ENCODE measurements at regions of chr7 and their contacts with region 1.

Region 1: GRCh38 chr7:5557920-5558401 is 134.3 kb upstream of the TNRC18 start:
- DNase-seq: peak; percentile 83 to 88
- ATAC-seq: peak; percentile 48
- H3K4me3 ChIP-seq: no peak overlapping the region
- H3K27ac ChIP-seq: peak overlapping the region; percentile 6 to 57
- H3K4me1 ChIP-seq: no peaks in the 10 kb centered on the region
- H3K27me3 ChIP-seq: no peaks in the 10 kb centered on the region

Region 2: GRCh38 chr7:5514440-5515035 is 43.4 kb before region 1 on chr7:
- intact Hi-C with region 1: no loop called
- DNase-seq: no peak
- ATAC-seq: no peak
- H3K4me3 ChIP-seq: peak overlapping the region in 1 of 2 donors; percentile 87
- H3K27ac ChIP-seq: no peak overlapping the region
- H3K4me1 ChIP-seq: no peaks in the 10 kb centered on the region
- H3K27me3 ChIP-seq: no peaks in the 10 kb centered on the region

Region 3: DNA sequence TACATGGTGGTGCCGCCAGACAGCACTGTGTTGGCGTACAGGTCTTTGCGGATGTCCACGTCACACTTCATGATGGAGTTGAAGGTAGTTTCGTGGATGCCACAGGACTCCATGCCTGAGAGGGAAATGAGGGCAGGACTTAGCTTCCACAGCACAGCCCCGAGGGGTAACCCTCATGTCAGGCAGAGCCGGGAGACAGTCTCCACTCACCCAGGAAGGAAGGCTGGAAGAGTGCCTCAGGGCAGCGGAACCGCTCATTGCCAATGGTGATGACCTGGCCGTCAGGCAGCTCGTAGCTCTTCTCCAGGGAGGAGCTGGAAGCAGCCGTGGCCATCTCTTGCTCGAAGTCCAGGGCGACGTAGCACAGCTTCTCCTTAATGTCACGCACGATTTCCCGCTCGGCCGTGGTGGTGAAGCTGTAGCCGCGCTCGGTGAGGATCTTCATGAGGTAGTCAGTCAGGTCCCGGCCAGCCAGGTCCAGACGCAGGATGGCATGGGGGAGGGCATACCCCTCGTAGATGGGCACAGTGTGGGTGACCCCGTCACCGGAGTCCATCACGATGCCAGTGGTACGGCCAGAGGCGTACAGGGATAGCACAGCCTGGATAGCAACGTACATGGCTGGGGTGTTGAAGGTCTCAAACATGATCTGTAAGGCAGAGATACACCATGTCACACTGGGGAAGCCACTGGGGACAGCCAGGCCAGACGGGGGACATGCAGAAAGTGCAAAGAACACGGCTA is 29.7 kb before region 1 on chr7:
- intact Hi-C with region 1: loop called in 1 of 2 experiments (anchors 1 kb)
- DNase-seq: peak; percentile 65 to 84
- ATAC-seq: no peak
- H3K4me3 ChIP-seq: peak overlapping the region; percentile 89 to 96
- H3K27ac ChIP-seq: peak overlapping the region in 1 of 2 donors; percentile 48
- H3K4me1 ChIP-seq: no peaks in the 10 kb centered on the region
- H3K27me3 ChIP-seq: peaks cover 0 to 2% of the 10 kb centered on the region in 2 donors

Region 4: GRCh38 chr7:5580714-5581395 is 22.9 kb after region 1 on chr7:
- intact Hi-C with region 1: no loop called
- DNase-seq: no peak
- ATAC-seq: no peak
- H3K4me3 ChIP-seq: no peak overlapping the region
- H3K27ac ChIP-seq: no peak overlapping the region
- H3K4me1 ChIP-seq: no peaks in the 10 kb centered on the region
- H3K27me3 ChIP-seq: no peaks in the 10 kb centered on the region

Region 5: GRCh38 chr7:5596046-5596895 is 38.3 kb after region 1 on chr7:
- intact Hi-C with region 1: no loop called
- DNase-seq: peak; percentile 95 to 96
- ATAC-seq: peak; percentile 79
- H3K4me3 ChIP-seq: peak overlapping the region; percentile 4 to 74
- H3K27ac ChIP-seq: peak overlapping the region in 1 of 2 donors; percentile 4
- H3K4me1 ChIP-seq: no peaks in the 10 kb centered on the region
- H3K27me3 ChIP-seq: peaks cover 0 to 2% of the 10 kb centered on the region in 2 donors